AG04449 (cell line): ENCODE measurements at regions of chr6 and their contacts with region 1.

Region 1: GRCh38 chr6:136643850-136644596 is 93.8 kb upstream of the MAP7 start:
- DNase-seq: peak; percentile 46
- H3K4me3 ChIP-seq: no peak overlapping the region
- CTCF ChIP-seq: peak; percentile 86

Region 2: DNA sequence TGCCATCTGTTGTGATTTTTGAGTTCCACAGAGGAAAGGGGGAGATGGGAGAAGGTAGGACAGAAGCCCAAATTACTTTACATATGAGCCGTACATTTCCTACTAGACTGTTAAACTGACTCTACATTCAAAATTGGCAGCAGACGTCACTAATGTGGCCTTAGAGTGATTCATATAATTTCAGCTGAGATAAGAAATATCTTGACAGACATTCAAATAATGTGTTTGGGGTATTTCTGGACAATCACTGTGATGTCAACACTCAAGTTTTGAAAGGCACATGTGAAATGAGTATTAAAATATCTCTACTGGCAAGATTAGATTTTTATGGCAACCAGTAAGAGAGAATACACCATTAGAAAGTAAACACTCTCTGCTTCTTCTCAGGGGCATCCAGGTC is 497.9 kb before region 1 on chr6:
- CTCF ChIA-PET with region 1: no interaction called
- POLR2A ChIA-PET with region 1: no interaction called
- DNase-seq: no peak
- H3K4me3 ChIP-seq: no peak overlapping the region
- CTCF ChIP-seq: no peak

Region 3: DNA sequence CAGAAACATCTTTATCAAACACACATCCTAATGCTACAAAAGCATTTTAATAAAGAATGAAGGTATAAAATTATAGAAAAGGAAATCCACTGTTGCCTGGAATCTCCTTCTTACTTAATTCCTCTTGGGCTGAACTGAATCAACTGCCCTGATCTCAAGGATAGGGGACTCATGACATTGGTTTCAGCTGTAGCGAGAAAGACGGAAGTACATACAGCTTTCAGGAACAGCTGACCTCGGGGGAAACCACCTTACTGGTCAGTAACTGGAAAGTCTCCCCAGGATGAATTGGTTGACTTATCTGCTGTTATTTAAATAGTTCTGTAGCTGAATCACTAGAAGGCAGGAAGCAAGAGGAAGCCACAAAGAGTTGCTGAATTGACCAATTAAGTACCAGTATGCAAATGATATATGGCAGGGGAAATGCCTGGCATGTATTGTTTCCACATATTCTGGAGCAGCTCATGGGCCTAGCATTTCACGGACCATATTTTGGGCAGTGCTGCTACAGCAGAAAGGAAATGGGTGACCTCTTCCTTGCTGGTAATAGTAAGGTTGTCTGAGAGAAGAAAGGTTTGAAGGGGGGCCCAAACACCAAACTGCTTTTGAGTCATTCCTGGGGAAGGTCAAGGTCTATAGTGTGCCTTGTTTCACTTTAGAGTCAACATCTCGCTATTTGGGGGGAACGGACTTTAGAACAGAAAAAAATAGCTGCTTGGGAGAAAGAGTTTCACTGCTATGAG is 50.1 kb before region 1 on chr6:
- CTCF ChIA-PET with region 1: interaction called, 10 read pairs
- POLR2A ChIA-PET with region 1: no interaction called
- DNase-seq: peak; percentile 99
- H3K4me3 ChIP-seq: peak overlapping the region; percentile 23
- CTCF ChIP-seq: no peak

Region 4: DNA sequence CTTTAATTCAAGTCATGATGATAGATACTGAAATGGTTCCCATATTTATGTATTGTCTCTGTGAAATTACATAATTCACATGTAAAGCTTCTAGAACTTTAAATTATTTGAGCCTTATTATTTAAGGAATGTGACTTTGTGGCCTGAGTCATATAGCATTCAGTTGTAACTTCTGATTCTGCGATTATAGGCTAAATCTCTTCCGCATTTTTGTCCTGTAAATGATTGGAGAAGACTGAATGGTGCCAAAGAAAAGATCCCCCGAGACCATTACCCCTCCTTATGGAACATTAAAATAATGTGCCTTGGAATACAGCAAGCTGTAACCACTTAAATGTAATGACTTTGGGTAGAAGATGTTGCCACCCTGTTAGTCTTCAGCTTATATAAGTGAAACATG is 30.5 kb before region 1 on chr6:
- CTCF ChIA-PET with region 1: interaction called, 26 read pairs
- POLR2A ChIA-PET with region 1: interaction called, 5 read pairs
- DNase-seq: peak; percentile 63
- H3K4me3 ChIP-seq: no peak overlapping the region
- CTCF ChIP-seq: no peak

Region 5: GRCh38 chr6:136633355-136633754 is 10.7 kb before region 1 on chr6:
- CTCF ChIA-PET with region 1: interaction called, 59 read pairs
- POLR2A ChIA-PET with region 1: no interaction called
- DNase-seq: no peak
- H3K4me3 ChIP-seq: no peak overlapping the region
- CTCF ChIP-seq: no peak

Region 6: GRCh38 chr6:136669299-136669699 is 25.3 kb after region 1 on chr6:
- CTCF ChIA-PET with region 1: interaction called, 10 read pairs
- POLR2A ChIA-PET with region 1: no interaction called
- DNase-seq: peak; percentile 80
- H3K4me3 ChIP-seq: no peak overlapping the region
- CTCF ChIP-seq: no peak

Region 7: GRCh38 chr6:136783495-136784270 is 139.7 kb after region 1 on chr6:
- CTCF ChIA-PET with region 1: interaction called, 351 read pairs
- POLR2A ChIA-PET with region 1: no interaction called
- DNase-seq: no peak
- H3K4me3 ChIP-seq: no peak overlapping the region
- CTCF ChIP-seq: no peak

Region 8: DNA sequence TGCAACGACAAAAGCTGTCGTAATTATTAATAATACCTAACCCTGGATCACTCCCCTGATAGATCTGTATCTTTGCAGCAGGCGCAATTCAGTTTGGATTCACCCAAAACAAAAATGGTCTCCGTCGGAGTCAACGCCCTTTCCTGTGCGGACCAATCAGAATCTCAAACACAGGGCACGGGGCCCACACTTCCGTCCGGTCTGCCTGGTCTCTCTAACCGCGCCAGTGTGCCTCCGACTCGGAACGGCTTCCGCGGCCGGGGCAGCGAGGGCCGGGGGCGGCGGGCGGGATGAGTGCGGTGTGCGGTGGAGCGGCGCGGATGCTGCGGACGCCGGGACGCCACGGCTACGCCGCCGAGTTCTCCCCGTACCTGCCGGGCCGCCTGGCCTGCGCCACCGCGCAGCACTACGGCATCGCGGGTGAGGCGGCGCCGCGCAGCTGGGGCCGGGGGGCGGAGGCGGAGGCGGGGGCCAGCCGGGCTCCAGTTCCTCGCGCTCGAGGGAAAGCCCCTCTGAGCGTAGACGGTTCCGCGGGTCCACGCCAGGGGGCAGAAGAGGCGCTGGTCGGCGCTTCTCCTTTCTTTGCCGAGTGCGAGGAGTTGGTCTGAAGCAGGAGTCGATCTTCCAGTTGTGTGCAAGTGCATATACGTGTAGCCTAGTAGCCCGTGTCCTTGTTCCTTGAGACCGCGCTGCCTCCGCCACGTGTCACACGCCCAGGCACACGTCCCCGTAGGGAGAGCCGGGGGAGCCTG is 178.5 kb after region 1 on chr6 and contains the start of gene PEX7:
- CTCF ChIA-PET with region 1: interaction called, 18 read pairs
- POLR2A ChIA-PET with region 1: interaction called, 4 read pairs
- DNase-seq: peak; percentile 58
- H3K4me3 ChIP-seq: peak within 1 kb of the TSS; percentile 82
- CTCF ChIP-seq: peak; percentile 92